ENCODE measurements at regions of chr7 and their contacts with region 1.

Region 1: GRCh38 chr7:85023045-85023712 is 163.7 kb downstream of the SEMA3D start:
- DNase-seq: peak in 19 of 42 donors; percentile 9 to 81 (median 54)

Region 2: GRCh38 chr7:83936056-83936708 is 1087.0 kb before region 1 on chr7:
- intact Hi-C with region 1: loop called (anchors 2 kb)
- DNase-seq: peak; percentile 31 to 89 (median 74)

Region 3: GRCh38 chr7:83976295-83976694 is 1046.9 kb before region 1 on chr7:
- intact Hi-C with region 1: loop called (anchors 5 kb)
- DNase-seq: peak in 6 of 42 donors; percentile 10 to 59 (median 26)

Region 4: DNA sequence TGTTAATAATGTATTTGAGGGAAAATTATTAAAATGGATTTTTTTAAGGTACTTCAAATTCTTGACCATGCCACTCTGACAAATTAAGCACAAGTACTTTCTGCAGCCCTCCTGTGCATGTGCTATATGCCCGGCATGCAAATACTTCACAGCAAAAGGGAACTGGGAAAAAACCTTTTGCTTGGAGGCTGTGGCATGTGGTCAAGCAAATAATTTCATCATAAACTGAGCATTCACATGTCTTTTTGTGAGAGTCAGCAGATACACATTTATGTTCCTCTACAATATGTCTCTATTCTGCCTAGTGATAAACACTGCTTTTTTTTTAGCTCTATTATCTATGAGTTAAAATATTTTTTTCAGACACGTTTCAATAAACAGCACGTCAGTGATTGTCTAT is 774.9 kb before region 1 on chr7:
- intact Hi-C with region 1: no loop called
- DNase-seq: no peak

Region 5: GRCh38 chr7:85840554-85840953 is 817.4 kb after region 1 on chr7:
- intact Hi-C with region 1: loop called (anchors 10 kb)
- DNase-seq: no peak